ENCODE measurements at regions of chr4 and their contacts with region 1.

Region 1: DNA sequence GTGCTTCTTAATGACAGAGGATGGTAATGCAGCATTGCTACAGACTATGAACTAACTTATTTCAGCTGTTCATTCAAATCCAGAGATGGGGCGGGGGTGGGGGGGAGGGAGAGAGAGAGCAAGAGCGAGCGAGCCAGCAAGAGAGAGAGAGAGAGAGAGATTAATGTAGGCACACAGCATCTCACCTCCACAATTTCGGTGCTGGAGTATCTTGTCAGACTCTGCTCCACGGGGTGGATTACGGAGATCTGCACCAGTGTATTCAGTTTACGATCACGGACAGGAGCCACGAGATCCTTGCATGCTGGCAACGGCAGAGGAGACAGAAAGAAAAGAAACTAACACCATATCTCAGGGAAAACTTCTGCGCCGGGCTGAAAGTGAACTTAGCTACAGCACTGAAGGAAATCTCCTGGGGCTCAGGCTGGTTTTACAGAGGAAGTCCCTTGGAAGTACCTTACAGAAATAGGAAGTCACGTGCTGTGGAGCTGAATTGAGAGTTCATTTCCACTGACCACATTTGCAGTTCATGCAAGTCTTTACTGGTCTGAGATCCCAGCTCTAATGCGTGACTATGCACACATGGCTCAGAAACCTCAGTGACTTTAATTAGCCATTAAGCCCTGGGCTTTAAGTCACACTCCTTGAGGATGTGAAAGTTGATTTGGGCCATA is 440.9 kb downstream of the INPP4B start:
- DNase-seq: peak; percentile 51
- H3K4me3 Mint-ChIP-seq: peak overlapping the region; percentile 97
- H3K27ac Mint-ChIP-seq: peak overlapping the region; percentile 99
- H3K4me1 Mint-ChIP-seq: peaks cover 78% of the 10 kb centered on the region
- H3K27me3 Mint-ChIP-seq: no peaks in the 10 kb centered on the region

Region 2: GRCh38 chr4:142282870-142283431 is 122.2 kb before region 1 on chr4:
- intact Hi-C with region 1: loop called (anchors 5 kb)
- DNase-seq: no peak
- H3K4me3 Mint-ChIP-seq: no peak overlapping the region
- H3K27ac Mint-ChIP-seq: no peak overlapping the region
- H3K4me1 Mint-ChIP-seq: peaks cover 5% of the 10 kb centered on the region
- H3K27me3 Mint-ChIP-seq: no peaks in the 10 kb centered on the region

Region 3: GRCh38 chr4:142379277-142380057 is 25.7 kb before region 1 on chr4:
- intact Hi-C with region 1: loop called (anchors 1 kb)
- DNase-seq: no peak
- H3K4me3 Mint-ChIP-seq: no peak overlapping the region
- H3K27ac Mint-ChIP-seq: no peak overlapping the region
- H3K4me1 Mint-ChIP-seq: peaks cover 61% of the 10 kb centered on the region
- H3K27me3 Mint-ChIP-seq: no peaks in the 10 kb centered on the region

Region 4: GRCh38 chr4:142824368-142824767 is 419.2 kb after region 1 on chr4:
- intact Hi-C with region 1: loop called (anchors 2 kb)
- DNase-seq: no peak
- H3K4me3 Mint-ChIP-seq: no peak overlapping the region
- H3K27ac Mint-ChIP-seq: no peak overlapping the region
- H3K4me1 Mint-ChIP-seq: peaks cover 5% of the 10 kb centered on the region
- H3K27me3 Mint-ChIP-seq: peaks cover 2% of the 10 kb centered on the region

Region 5: GRCh38 chr4:143358923-143359643 is 953.9 kb after region 1 on chr4:
- intact Hi-C with region 1: loop called (anchors 10 kb)
- DNase-seq: no peak
- H3K4me3 Mint-ChIP-seq: peak overlapping the region; percentile 62
- H3K27ac Mint-ChIP-seq: peak overlapping the region; percentile 84
- H3K4me1 Mint-ChIP-seq: peaks cover 18% of the 10 kb centered on the region
- H3K27me3 Mint-ChIP-seq: peaks cover 5% of the 10 kb centered on the region